Tibial artery (tissue), 4 donors: ENCODE measurements at regions of chr5 and their contacts with region 1.

Region 1: GRCh38 chr5:139301808-139302499 is 8.4 kb downstream of the MATR3 start:
- DNase-seq: no peak
- H3K4me3 ChIP-seq: no peak overlapping the region
- H3K27ac ChIP-seq: no peak overlapping the region
- H3K4me1 ChIP-seq: peaks cover 0 to 100% (median 64%) of the 10 kb centered on the region in 4 donors
- H3K27me3 ChIP-seq: no peaks in the 10 kb centered on the region
- CTCF ChIP-seq: no peak

Region 2: DNA sequence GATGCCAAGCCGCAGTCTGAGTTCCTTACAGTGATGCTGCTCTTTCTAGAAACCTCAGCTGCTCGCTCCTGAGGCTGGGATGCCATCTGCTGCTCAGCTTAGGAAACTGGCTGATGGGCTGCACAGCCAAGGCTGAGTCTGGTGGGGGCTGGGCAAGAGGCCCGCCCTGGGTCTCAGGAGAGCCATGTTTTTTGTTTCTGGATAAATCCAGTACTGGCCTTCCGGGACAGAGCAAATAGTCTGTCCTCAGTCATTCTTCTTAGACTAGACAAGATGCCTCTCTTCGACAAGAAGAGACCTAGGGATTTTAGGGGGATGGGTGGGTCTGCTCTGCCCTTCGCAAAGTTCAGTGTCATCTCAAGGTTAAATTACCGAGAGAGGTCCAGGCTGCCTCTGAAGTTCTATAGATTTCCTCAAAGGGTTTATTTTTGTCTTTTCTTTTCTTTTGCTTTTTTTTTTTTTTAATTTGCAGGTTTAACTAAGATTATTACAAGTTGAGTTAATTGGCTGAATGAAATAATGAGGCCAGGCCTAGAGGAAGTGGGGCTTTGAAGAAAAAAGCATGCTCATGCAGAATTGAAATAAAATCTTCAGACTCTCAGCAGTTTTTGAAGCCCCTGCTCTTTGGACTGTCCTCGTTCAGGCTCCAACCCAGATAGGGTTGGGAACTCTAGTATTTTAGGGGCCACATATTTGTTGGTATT is 39.1 kb before region 1 on chr5:
- intact Hi-C with region 1: no loop called
- DNase-seq: peak; percentile 86 to 94
- H3K4me3 ChIP-seq: no peak overlapping the region
- H3K27ac ChIP-seq: peak overlapping the region; percentile 34 to 50
- H3K4me1 ChIP-seq: peaks cover 0 to 11% (median 9%) of the 10 kb centered on the region in 4 donors
- H3K27me3 ChIP-seq: no peaks in the 10 kb centered on the region
- CTCF ChIP-seq: peak; percentile 95

Region 3: GRCh38 chr5:139335811-139336210 is 33.9 kb after region 1 on chr5:
- intact Hi-C with region 1: loop called (anchors 5 kb)
- DNase-seq: no peak
- H3K4me3 ChIP-seq: no peak overlapping the region
- H3K27ac ChIP-seq: no peak overlapping the region
- H3K4me1 ChIP-seq: peaks cover 0 to 20% (median 6%) of the 10 kb centered on the region in 4 donors
- H3K27me3 ChIP-seq: no peaks in the 10 kb centered on the region
- CTCF ChIP-seq: no peak